ENCODE measurements at regions of chr11 and their contacts with region 1.

Region 1: DNA sequence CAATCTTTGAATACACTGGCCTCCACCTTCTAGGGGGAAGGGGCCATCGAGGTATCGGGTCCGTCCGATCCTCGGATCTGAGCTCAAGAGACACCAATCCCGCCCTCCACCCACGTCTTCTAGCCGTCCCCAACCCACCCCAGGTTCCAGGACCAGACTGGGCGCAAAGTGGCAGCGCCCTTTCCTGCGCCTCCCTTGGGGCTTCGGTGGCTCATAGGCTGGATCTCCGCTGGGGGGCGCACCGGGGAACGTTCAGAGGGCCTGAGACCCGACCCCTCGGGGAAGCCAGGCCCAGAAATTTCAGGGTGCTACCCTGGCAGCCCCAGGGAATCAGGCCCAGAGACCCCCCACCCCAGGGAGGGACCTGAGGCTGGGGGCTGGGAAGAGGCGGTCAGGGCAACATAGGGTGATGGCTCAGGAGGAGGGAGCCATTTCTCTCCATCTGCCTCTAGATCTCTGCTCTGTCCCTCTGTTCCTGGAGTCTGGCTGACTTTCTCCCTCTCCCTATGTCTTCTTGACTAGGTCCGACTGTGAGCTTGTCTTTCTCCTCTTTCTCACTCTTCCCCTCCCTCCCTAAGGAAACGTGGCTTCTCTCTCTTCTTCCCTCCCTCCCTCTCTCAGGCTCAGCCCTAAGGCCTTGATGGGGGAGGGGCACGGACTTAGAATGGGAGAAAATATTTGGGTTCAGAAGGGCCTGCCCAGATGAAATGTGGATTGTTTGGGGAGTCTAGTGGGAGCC is 1.1 kb downstream of the CREB3L1 start:
- DNase-seq: peak; percentile 84 to 88 (median 86)
- ATAC-seq: peak; percentile 85
- H3K4me3 ChIP-seq: peak overlapping the region; percentile 72
- H3K27ac ChIP-seq: peak overlapping the region; percentile 69
- H3K4me1 ChIP-seq: peaks cover 56 to 61% of the 10 kb centered on the region in 2 experiments
- H3K27me3 ChIP-seq: no peaks in the 10 kb centered on the region
- CTCF ChIP-seq: peak; percentile 74 to 90 (median 89)
- EP300 ChIP-seq: no peak
- POLR2A ChIP-seq: peak; percentile 54
- RAD21 ChIP-seq: peak; percentile 43 to 69

Region 2: GRCh38 chr11:46295312-46296058 is 16.9 kb after region 1 on chr11:
- CTCF ChIA-PET with region 1: no interaction called
- POLR2A ChIA-PET with region 1: interaction called, 20 read pairs
- in situ Hi-C with region 1: no loop called
- intact Hi-C with region 1: loop called (anchors 1 kb)
- DNase-seq: peak; percentile 91 to 96 (median 96)
- ATAC-seq: peak; percentile 91
- H3K4me3 ChIP-seq: peak overlapping the region; percentile 48
- H3K27ac ChIP-seq: peak overlapping the region; percentile 85
- H3K4me1 ChIP-seq: peaks cover 34 to 55% of the 10 kb centered on the region in 2 experiments
- H3K27me3 ChIP-seq: no peaks in the 10 kb centered on the region
- CTCF ChIP-seq: no peak
- EP300 ChIP-seq: no peak
- POLR2A ChIP-seq: peak; percentile 78
- RAD21 ChIP-seq: no peak; a peak in 1 of 4 replicates